ENCODE measurements at regions of chr9 and their contacts with region 1.

Region 1: GRCh38 chr9:111631071-111631971 is at the start of gene DNAJC25:
- DNase-seq: peak; percentile 97
- H3K4me3 ChIP-seq: peak within 1 kb of the TSS; percentile 88 to 98 (median 90)
- H3K27ac ChIP-seq: peak within 1 kb of the TSS; percentile 73
- H3K4me1 ChIP-seq: peaks cover 31% of the 10 kb centered on the region
- H3K27me3 ChIP-seq: no peaks in the 10 kb centered on the region
- CTCF ChIP-seq: no peak
- POLR2A ChIP-seq: peak; percentile 100
- total RNA-seq, gene DNAJC25: 5.2 and 5.5 TPM in 2 replicates

Region 2: GRCh38 chr9:111483862-111484571 is 147.3 kb before region 1 on chr9 and contains the start of gene ECPAS:
- CTCF ChIA-PET with region 1: no interaction called
- POLR2A ChIA-PET with region 1: no interaction called
- dilution Hi-C with region 1: no loop called
- intact Hi-C with region 1: loop called (anchors 2 kb)
- DNase-seq: peak; percentile 81
- H3K4me3 ChIP-seq: peak within 1 kb of the TSS; percentile 49 to 78 (median 75)
- H3K27ac ChIP-seq: peak within 1 kb of the TSS; percentile 70
- H3K4me1 ChIP-seq: peaks cover 8% of the 10 kb centered on the region
- H3K27me3 ChIP-seq: no peaks in the 10 kb centered on the region
- CTCF ChIP-seq: peak in 1 of 2 donors; percentile 3
- POLR2A ChIP-seq: no peak
- total RNA-seq, gene ECPAS: 72.3 and 89.3 TPM in 2 replicates

Region 3: DNA sequence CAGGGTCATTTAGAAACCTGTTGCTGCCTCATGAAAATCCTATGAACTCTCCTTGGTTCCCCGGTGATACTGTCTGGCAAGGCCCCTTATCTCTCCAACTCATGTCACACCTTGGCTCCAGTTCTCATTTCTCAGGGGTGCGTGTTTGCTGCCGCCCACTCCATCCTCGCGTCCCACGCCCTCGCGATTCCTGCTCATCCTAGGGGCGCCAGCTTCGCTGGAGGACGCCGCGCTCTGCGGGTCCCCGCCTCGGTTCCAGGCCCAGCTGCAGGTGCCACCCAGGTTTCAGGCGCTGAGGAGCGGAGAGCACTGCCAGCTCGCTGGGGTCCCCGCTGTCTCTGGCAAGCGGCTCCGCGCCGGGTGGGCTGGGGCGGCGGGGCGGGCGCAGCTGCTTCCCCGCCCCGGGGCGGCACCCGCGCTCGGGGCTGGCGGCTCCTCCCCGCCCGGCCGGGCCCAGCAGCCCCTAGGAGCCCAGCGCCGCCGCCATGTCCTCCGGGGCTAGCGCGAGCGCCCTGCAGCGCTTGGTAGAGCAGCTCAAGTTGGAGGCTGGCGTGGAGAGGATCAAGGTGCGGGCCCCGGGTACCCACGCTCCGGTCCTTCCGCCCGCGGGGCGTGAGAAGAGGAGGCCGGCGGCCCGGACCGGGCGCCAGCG is 30.0 kb after region 1 on chr9 and contains the start of gene GNG10:
- CTCF ChIA-PET with region 1: no interaction called
- POLR2A ChIA-PET with region 1: no interaction called
- dilution Hi-C with region 1: no loop called
- intact Hi-C with region 1: loop called (anchors 1 kb)
- DNase-seq: peak; percentile 43
- H3K4me3 ChIP-seq: peak within 1 kb of the TSS; percentile 45 to 89 (median 75)
- H3K27ac ChIP-seq: no peak within 1 kb of the TSS
- H3K4me1 ChIP-seq: peaks cover 15% of the 10 kb centered on the region
- H3K27me3 ChIP-seq: no peaks in the 10 kb centered on the region
- CTCF ChIP-seq: no peak
- POLR2A ChIP-seq: peak; percentile 62
- total RNA-seq, gene GNG10: 32.9 and 33.0 TPM in 2 replicates

Region 4: DNA sequence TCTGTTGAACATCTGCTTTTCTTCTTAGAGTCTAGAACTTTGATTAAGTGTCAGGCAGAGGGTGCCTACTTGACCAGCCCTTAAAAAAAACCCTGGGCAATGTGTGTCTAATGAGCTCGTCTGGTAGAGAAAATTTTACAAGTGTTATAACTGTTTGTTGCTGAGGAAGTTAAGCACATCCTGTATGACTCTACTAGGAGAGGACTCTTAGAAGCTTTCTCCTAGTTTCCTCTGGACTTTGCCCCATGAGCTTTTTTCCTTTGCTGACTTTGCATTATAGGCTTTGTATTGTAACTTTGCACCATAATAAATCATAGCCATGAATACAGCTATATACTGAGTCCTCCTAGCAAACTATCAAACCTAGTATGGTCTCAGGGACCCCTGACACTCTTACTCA is 69.5 kb after region 1 on chr9:
- CTCF ChIA-PET with region 1: no interaction called
- POLR2A ChIA-PET with region 1: interaction called, 3 read pairs
- dilution Hi-C with region 1: no loop called
- intact Hi-C with region 1: loop called (anchors 5 kb)
- DNase-seq: peak; percentile 75
- H3K4me3 ChIP-seq: no peak overlapping the region
- H3K27ac ChIP-seq: peak overlapping the region; percentile 83
- H3K4me1 ChIP-seq: peaks cover 14% of the 10 kb centered on the region
- H3K27me3 ChIP-seq: no peaks in the 10 kb centered on the region
- CTCF ChIP-seq: no peak
- POLR2A ChIP-seq: no peak

Region 5: GRCh38 chr9:111743275-111743674 is 112.0 kb after region 1 on chr9:
- CTCF ChIA-PET with region 1: no interaction called
- POLR2A ChIA-PET with region 1: no interaction called
- dilution Hi-C with region 1: no loop called
- intact Hi-C with region 1: no loop called
- DNase-seq: peak; percentile 21
- H3K4me3 ChIP-seq: no peak overlapping the region
- H3K27ac ChIP-seq: no peak overlapping the region
- H3K4me1 ChIP-seq: peaks cover 8% of the 10 kb centered on the region
- H3K27me3 ChIP-seq: no peaks in the 10 kb centered on the region
- CTCF ChIP-seq: no peak
- POLR2A ChIP-seq: no peak

Region 6: DNA sequence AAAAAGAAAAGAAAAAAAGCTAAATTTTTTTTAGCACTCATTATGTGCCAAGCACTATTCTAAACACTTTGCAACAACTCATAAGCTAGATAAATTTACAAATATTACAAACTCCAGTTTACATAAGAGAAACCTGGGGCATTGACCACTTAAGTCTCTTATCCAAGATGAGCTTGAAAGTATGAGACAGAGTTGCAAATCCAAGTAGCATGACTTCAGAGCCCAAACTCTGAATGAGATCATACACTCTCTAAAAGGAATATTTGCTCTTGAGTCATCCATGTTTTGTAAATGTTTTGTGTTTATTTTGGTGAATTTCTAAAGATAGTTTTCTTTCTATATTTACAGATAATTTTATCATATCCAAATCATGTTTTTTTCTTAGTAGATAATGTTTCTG is 167.5 kb after region 1 on chr9:
- CTCF ChIA-PET with region 1: no interaction called
- POLR2A ChIA-PET with region 1: no interaction called
- dilution Hi-C with region 1: no loop called
- intact Hi-C with region 1: no loop called
- DNase-seq: no peak
- H3K4me3 ChIP-seq: no peak overlapping the region
- H3K27ac ChIP-seq: no peak overlapping the region
- H3K4me1 ChIP-seq: no peaks in the 10 kb centered on the region
- H3K27me3 ChIP-seq: no peaks in the 10 kb centered on the region
- CTCF ChIP-seq: no peak
- POLR2A ChIP-seq: no peak

Measured in endothelial cell of umbilical vein (primary cell).